Gastrocnemius medialis (tissue), 4 donors: ENCODE measurements at regions of chr20 and their contacts with region 1.

Region 1: DNA sequence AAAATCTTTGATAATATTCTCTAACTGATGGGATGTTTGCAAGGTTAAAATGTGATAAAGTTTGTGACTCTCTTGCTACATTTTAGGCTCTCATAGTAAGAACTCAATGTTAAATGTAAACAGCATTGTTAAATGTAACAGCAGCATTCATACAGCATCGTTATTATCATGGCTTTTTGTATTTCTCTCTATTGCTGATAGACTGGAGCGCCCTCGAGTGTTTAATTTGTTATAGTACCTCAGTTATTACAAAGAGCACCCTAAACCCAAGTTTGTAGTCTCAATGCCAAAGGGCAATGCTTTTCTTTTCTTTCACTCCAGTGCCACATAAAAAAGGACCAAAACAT is 14.9 kb upstream of the TTPAL start:
- DNase-seq: no peak
- ATAC-seq: peak in 1 of 2 donors; percentile 50
- H3K4me3 ChIP-seq: no peak overlapping the region
- H3K27ac ChIP-seq: no peak overlapping the region
- H3K4me1 ChIP-seq: no peaks in the 10 kb centered on the region
- H3K27me3 ChIP-seq: no peaks in the 10 kb centered on the region
- CTCF ChIP-seq: peak in 3 of 5 experiments; percentile 15 to 31 (median 19)
- POLR2A ChIP-seq: no peak

Region 2: DNA sequence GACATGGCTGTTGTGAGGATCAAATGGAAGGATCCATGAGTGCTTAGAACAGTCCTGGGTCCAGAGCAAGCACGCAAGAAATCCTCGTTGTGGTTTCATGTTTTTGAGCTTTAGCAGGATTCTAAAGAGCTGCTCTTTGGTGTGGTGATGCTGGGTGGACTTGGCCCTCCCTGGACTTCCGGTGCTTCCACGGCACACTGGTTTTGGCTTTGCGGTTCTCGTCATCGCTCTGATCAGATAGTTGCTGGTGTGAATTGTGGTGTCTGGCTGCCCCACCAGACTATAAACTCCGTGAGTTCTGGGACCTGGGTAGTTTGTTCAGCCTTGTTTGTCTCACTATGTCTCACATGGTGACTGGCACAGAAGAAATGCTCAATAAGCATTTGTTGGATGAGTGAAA is 102.0 kb before region 1 on chr20:
- in situ Hi-C with region 1: no loop called
- intact Hi-C with region 1: no loop called
- DNase-seq: no peak
- ATAC-seq: no peak
- H3K4me3 ChIP-seq: no peak overlapping the region
- H3K27ac ChIP-seq: no peak overlapping the region
- H3K4me1 ChIP-seq: no peaks in the 10 kb centered on the region
- H3K27me3 ChIP-seq: peaks cover 0 to 2% (median 0%) of the 10 kb centered on the region in 3 donors
- CTCF ChIP-seq: no peak
- POLR2A ChIP-seq: no peak

Region 3: DNA sequence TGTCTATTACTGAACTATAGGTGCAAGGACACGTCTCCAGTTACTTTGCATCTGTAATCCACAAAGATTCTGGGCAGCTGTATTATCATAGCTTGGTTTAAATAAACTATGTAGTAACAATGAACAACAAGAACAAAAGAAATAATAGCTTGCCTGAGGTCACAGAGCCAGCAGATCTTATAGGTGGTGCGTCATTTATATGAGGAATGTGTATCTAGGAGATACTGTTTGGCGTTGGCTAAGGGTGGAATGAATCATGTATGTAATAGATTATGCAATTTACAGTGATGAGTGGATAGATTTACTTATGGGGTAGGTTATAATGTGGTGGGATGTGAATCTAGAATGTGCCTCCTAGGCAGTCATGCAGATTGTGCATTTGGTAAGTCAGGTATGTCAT is 62.5 kb before region 1 on chr20:
- in situ Hi-C with region 1: loop called in 1 of 4 experiments (anchors 10 kb)
- intact Hi-C with region 1: no loop called
- DNase-seq: no peak
- ATAC-seq: no peak
- H3K4me3 ChIP-seq: no peak overlapping the region
- H3K27ac ChIP-seq: no peak overlapping the region
- H3K4me1 ChIP-seq: no peaks in the 10 kb centered on the region
- H3K27me3 ChIP-seq: peaks cover 0 to 3% (median 0%) of the 10 kb centered on the region in 3 donors
- CTCF ChIP-seq: no peak
- POLR2A ChIP-seq: no peak

Region 4: DNA sequence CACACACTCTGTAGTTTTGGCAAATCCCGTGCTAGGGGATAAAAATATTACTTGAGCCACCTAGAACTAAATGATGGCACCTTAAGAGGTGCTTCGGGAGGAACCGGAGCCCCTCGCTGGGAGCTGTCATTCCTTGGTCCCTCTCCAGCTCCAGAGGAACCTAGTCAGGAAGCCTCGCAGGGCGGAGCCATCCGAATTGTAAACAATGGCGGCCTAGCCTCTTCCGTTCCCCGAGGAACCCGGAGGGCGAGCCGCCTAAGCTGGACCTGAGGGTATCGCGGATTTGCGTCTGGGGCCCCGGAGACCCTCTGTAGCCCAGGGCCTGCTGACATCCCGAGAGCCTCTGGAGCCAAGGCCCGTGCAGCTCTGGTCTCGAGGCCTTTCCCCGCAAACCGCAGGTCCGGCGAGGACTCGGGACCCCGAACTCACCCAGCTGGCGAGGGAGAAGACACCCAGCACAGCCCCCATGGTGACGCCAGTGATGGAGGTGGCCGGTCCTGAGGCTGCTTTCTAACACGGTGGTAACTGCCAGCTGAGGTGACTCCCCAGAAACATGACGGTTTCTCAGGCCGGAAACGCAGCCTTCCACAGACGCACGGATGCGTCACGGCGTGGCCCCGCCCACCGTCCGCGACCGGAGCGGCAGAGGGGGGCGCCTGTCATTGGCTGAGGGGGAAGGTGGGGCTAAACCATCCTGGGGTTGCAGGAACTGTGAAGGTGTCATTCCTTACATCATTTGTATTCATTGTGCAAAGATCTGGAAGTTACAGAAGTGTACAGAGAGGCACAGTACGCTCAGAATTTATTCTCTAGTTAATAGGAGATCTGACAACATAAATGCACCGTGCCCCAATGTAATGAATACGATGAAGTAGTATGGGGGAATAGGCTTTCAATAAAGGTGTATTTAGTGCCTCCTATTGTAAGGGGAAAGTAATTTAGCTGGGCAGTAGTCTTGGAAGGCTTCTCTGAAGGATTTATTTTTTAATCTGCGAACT is 61.0 kb after region 1 on chr20 and contains the start of gene SERINC3:
- in situ Hi-C with region 1: no loop called
- intact Hi-C with region 1: no loop called
- DNase-seq: peak; percentile 94 to 96
- ATAC-seq: peak; percentile 93 to 95
- H3K4me3 ChIP-seq: peak within 1 kb of the TSS; percentile 94 to 100 (median 98)
- H3K27ac ChIP-seq: peak within 1 kb of the TSS; percentile 98 to 100 (median 100)
- H3K4me1 ChIP-seq: peaks cover 42 to 49% of the 10 kb centered on the region in 2 donors
- H3K27me3 ChIP-seq: no peaks in the 10 kb centered on the region
- CTCF ChIP-seq: no peak
- POLR2A ChIP-seq: peak; percentile 97
- total RNA-seq, gene SERINC3: 93.3 to 174 (median 139) TPM